ENCODE measurements at regions of chr14 and their contacts with region 1.

Region 1: DNA sequence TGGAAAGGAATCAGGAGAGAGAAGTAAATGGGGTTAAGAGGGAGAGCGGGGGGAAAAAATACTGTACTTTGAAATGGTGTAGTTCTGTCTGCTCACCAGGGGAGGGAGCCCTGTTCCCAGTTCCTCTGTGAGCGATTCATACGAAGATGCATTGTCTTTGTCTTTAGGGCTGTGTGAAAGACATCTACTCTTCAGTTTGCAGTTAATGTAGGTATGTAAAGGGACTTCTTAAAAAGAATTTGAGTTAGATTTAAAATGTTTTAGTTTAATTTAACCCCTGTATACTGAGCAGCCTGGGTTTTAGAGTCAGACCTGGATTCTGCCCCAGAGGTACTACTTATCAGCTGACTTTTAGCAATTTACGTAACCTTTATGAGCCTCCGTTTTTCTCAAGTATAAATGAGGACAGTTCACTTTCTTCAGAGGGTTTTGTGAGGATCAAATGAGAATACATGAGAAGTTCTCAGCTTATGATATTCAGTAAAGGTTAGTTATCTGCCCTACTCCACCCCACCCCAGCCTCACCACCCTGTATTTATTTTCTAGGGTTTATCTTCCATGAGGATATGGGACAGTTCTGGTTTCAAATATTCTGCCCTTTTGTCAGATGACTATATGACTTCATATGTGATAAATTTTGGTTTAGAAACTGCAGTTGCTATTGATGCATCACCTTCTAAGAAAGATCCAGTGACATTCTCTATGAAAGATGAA is 82.5 kb upstream of the EVL start:
- DNase-seq: peak; percentile 78
- H3K4me3 ChIP-seq: no peak overlapping the region
- H3K27ac ChIP-seq: no peak overlapping the region
- H3K4me1 ChIP-seq: no peaks in the 10 kb centered on the region
- H3K27me3 ChIP-seq: no peaks in the 10 kb centered on the region
- CTCF ChIP-seq: peak; percentile 90

Region 2: DNA sequence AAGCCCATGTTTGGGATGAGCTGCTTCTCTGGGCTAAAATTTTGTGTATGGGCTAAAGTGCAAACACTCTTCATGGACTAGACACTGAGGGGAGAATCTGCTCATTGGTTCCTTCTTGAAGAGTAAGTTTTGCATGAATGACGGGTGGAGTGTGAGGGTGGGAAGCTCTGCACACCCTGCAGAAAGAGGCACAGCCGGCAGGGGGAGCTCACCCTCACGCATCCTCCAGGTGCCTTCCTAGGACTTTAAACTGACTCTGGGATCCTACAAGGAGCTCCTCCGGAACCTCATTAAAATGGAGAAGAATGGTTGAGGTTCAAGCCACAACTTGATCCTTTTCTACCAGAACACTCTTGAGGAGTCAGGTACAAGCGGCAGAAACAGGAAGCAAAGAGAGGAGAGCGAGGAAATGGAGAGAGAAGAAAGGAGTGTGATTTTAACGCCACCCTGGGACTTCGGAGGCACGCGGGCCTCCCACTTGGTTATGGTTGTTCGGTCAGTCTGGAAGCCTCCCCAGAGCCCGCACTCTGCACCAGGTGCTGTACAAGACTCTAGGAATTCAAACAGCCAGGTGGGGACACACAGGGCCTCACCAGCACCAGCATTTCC is 589.5 kb before region 1 on chr14:
- CTCF ChIA-PET with region 1: no interaction called
- POLR2A ChIA-PET with region 1: no interaction called
- intact Hi-C with region 1: no loop called
- DNase-seq: peak; percentile 69
- H3K4me3 ChIP-seq: no peak overlapping the region
- H3K27ac ChIP-seq: no peak overlapping the region
- H3K4me1 ChIP-seq: peaks cover 3% of the 10 kb centered on the region
- H3K27me3 ChIP-seq: no peaks in the 10 kb centered on the region
- CTCF ChIP-seq: peak; percentile 90

Region 3: GRCh38 chr14:100108042-100108825 is 125.5 kb after region 1 on chr14:
- CTCF ChIA-PET with region 1: interaction called, 8 read pairs
- POLR2A ChIA-PET with region 1: interaction called, 8 read pairs
- intact Hi-C with region 1: loop called (anchors 1 kb)
- DNase-seq: peak; percentile 77
- H3K4me3 ChIP-seq: no peak overlapping the region
- H3K27ac ChIP-seq: no peak overlapping the region
- H3K4me1 ChIP-seq: peaks cover 13% of the 10 kb centered on the region
- H3K27me3 ChIP-seq: no peaks in the 10 kb centered on the region
- CTCF ChIP-seq: peak; percentile 87

Region 4: DNA sequence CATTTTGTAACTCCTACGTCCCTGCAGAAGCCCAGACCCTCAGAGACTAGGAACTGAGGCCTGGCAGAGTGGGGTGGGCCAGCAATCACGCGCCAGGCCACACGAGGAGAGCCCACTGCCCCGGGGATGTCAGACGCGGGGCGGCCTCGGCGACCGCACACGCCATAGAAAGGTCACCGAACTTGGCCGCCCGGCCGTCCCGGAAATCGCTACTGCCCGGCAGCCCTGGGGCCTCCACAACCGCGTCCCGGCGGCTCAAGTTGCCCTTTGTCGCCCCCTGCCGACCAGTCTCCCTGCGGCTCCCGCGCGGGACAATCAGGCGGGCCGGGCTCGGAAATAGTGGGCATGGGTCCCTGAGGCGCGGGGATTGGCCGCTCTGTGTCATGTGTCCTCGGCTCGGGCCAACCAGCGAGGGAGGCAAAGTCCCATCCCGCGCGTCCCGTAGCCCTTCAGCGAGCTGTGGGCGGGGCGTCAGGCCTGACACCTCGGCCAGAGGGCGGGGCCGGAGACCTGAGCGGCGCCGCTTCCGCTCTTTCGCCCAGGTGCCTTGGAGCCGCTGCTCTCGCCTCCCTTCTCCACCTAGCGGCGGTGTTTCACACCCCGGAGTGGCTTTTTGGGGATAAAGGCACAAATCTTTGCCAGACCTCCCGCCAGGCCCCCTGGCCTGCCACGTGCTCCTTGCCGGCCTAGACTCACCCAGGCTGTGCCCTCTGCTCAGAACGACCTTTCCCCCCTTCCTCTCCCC is 210.2 kb after region 1 on chr14:
- CTCF ChIA-PET with region 1: interaction called, 3 read pairs
- POLR2A ChIA-PET with region 1: no interaction called
- intact Hi-C with region 1: loop called (anchors 5 kb)
- DNase-seq: peak; percentile 99
- H3K4me3 ChIP-seq: peak overlapping the region; percentile 51
- H3K27ac ChIP-seq: peak overlapping the region; percentile 77
- H3K4me1 ChIP-seq: peaks cover 14% of the 10 kb centered on the region
- H3K27me3 ChIP-seq: no peaks in the 10 kb centered on the region
- CTCF ChIP-seq: peak; percentile 95

Region 5: GRCh38 chr14:100375963-100376735 is 393.5 kb after region 1 on chr14:
- CTCF ChIA-PET with region 1: no interaction called
- POLR2A ChIA-PET with region 1: no interaction called
- intact Hi-C with region 1: loop called (anchors 5 kb)
- DNase-seq: peak; percentile 97
- H3K4me3 ChIP-seq: peak within 1 kb of the TSS; percentile 99
- H3K27ac ChIP-seq: peak within 1 kb of the TSS; percentile 96
- H3K4me1 ChIP-seq: peaks cover 5% of the 10 kb centered on the region
- H3K27me3 ChIP-seq: no peaks in the 10 kb centered on the region
- CTCF ChIP-seq: no peak